Ovary (tissue), 10 donors: ENCODE measurements at regions of chr7 and their contacts with region 1.

Region 1: DNA sequence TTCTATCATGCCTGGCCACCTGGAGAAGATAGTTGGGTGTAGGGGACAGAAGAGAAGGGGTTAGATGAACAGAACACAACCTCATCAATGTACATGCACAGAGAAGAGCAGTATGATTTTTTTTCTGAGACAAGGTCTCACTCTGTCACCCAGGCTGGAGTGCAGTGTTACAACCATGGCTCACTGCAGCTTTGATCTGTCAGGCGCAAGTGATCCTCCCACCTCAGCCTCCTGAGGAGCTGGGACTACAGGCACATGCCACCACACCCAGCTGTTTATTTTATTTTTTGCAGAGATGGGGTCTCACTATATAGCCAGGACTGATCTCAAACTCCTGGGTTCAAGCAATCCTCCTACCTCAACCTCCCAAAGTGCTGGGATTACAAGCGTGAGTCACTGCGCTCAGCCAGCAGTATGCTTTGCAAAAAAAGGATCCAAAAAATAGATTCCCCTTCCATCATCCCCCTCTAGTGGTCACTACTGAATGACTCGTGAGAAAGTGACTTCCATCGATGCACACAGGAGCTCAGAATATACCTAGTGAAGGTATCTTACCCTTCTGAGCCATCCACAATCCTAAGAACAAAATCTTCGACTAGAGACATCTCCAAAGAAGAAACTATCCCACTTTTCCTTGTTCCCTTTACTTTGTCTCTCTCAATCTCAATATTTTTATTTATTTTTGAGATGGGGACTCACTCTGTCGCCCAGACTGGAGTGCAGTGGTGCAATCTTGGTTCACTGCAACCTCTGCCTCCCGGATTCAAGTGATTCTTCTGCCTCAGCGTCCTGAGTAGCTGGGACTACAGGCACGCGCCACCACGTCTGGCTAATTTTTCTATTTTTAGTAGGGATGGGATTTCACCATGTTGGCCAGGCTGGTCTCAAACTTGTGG is 21.0 kb downstream of the ZCWPW1 start:
- DNase-seq: peak in 1 of 5 donors; percentile 29
- H3K4me3 ChIP-seq: no peak overlapping the region
- H3K27ac ChIP-seq: no peak overlapping the region
- H3K4me1 ChIP-seq: no peaks in the 10 kb centered on the region
- H3K27me3 ChIP-seq: no peaks in the 10 kb centered on the region
- CTCF ChIP-seq: peak in 2 of 3 donors; percentile 37 to 44
- EP300 ChIP-seq: no peak
- POLR2A ChIP-seq: no peak

Region 2: DNA sequence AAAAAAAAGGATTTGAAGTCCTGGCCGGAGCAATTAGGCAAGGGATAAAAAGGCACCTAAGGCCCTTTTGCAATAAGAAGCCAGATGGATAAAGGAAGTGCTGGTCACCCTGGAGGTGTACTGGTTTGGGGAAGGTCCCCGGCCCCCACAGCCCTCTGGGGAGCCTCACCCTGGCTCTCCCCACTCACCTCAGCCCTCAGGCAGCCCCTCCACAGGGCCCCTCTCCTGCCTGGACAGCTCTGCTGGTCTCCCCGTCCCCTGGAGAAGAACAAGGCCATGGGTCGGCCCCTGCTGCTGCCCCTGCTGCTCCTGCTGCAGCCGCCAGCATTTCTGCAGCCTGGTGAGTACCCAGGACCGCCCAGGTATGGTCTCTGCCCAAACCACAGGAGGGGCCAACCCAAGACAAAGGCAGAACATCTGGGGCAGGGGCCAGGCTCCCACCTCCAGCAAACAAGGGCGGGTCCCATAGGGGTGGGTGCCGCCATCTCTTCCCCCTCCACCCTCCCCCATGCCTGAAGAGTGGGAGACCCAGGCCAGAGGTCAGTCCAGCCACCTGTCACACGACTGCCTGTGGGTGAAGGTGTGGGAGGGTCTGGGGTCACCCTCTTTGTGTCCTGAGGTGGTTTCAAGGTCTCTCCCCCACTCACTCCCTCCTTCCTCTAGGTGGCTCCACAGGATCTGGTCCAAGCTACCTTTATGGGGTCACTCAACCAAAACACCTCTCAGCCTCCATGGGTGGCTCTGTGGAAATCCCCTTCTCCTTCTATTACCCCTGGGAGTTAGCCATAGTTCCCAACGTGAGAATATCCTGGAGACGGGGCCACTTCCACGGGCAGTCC is 49.3 kb before region 1 on chr7 and contains the start of gene PILRB:
- intact Hi-C with region 1: loop called in 1 of 4 experiments (anchors 10 kb)
- DNase-seq: no peak
- H3K4me3 ChIP-seq: no peak within 1 kb of the TSS
- H3K27ac ChIP-seq: no peak within 1 kb of the TSS
- H3K4me1 ChIP-seq: no peaks in the 10 kb centered on the region
- H3K27me3 ChIP-seq: no peaks in the 10 kb centered on the region
- CTCF ChIP-seq: no peak
- EP300 ChIP-seq: no peak
- POLR2A ChIP-seq: no peak
- total RNA-seq, gene PILRB: 29.0 to 55.9 (median 41.1) TPM

Region 3: GRCh38 chr7:100469227-100470044 is 61.9 kb after region 1 on chr7:
- intact Hi-C with region 1: no loop called
- DNase-seq: peak; percentile 88 to 94 (median 92)
- H3K4me3 ChIP-seq: no peak overlapping the region
- H3K27ac ChIP-seq: peak overlapping the region in 1 of 2 donors; percentile 42
- H3K4me1 ChIP-seq: peaks cover 7% of the 10 kb centered on the region
- H3K27me3 ChIP-seq: no peaks in the 10 kb centered on the region
- CTCF ChIP-seq: peak; percentile 90 to 93 (median 92)
- EP300 ChIP-seq: no peak
- POLR2A ChIP-seq: no peak

Region 4: GRCh38 chr7:102300643-102301233 is 1893.2 kb after region 1 on chr7:
- intact Hi-C with region 1: no loop called
- DNase-seq: no peak
- H3K4me3 ChIP-seq: no peak overlapping the region
- H3K27ac ChIP-seq: no peak overlapping the region
- H3K4me1 ChIP-seq: no peaks in the 10 kb centered on the region
- H3K27me3 ChIP-seq: no peaks in the 10 kb centered on the region
- CTCF ChIP-seq: no peak
- EP300 ChIP-seq: no peak
- POLR2A ChIP-seq: no peak